ENCODE measurements at regions of chr3 and their contacts with region 1.

Region 1: GRCh38 chr3:192082730-192083660 is 622.0 kb downstream of the PYDC2 start:
- DNase-seq: no peak
- H3K4me3 ChIP-seq: no peak overlapping the region
- H3K27ac ChIP-seq: no peak overlapping the region
- H3K4me1 ChIP-seq: no peaks in the 10 kb centered on the region
- H3K27me3 ChIP-seq: no peaks in the 10 kb centered on the region
- CTCF ChIP-seq: no peak
- POLR2A ChIP-seq: no peak

Region 2: DNA sequence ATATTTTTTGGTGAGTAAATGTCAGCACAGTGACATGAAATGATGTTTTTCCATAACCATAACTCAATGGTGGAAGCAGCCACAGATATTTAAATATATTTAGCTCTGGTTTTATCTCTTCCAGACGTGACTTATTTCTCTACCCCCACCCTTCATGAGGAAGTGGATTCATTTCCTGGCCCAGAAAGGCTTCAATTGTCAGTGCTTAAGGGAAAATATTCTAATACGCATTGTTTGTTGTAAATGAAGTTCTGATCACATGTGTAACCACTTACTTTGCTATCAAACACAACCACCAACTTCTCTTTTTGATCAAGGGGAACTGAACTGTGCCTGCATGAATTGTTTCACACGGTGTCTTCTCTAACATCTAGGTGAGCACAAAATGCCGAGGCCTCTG is 1681.0 kb before region 1 on chr3:
- CTCF ChIA-PET with region 1: no interaction called
- POLR2A ChIA-PET with region 1: no interaction called
- dilution Hi-C with region 1: no loop called
- intact Hi-C with region 1: no loop called
- DNase-seq: peak; percentile 77
- H3K4me3 ChIP-seq: no peak overlapping the region
- H3K27ac ChIP-seq: peak overlapping the region; percentile 61
- H3K4me1 ChIP-seq: peaks cover 13% of the 10 kb centered on the region
- H3K27me3 ChIP-seq: no peaks in the 10 kb centered on the region
- CTCF ChIP-seq: no peak
- POLR2A ChIP-seq: no peak

Region 3: DNA sequence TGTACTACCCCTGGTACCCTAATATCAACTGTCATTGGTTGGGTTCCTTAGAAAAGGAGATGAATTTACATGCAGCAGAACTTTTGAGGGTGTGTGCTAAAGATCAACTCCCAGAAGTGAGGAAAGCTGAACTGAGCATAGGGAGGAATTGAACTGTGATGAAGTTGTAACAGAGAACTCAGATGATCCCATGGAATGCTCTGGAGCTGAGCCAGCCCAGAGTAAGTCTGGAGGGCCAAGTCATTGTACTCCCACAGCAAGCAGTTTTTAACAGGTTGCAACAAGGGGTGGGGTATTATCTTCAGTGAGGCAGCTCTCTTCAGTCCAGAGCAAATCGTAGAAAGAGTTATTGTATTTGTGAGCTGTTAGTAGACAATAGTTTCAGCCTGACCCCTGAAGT is 49.7 kb before region 1 on chr3:
- CTCF ChIA-PET with region 1: no interaction called
- POLR2A ChIA-PET with region 1: no interaction called
- dilution Hi-C with region 1: no loop called
- intact Hi-C with region 1: loop called (anchors 5 kb)
- DNase-seq: no peak
- H3K4me3 ChIP-seq: no peak overlapping the region
- H3K27ac ChIP-seq: no peak overlapping the region
- H3K4me1 ChIP-seq: no peaks in the 10 kb centered on the region
- H3K27me3 ChIP-seq: no peaks in the 10 kb centered on the region
- CTCF ChIP-seq: no peak
- POLR2A ChIP-seq: no peak